Mammary epithelial cell (primary cell): ENCODE measurements at regions of chr2 and their contacts with region 1.

Region 1: DNA sequence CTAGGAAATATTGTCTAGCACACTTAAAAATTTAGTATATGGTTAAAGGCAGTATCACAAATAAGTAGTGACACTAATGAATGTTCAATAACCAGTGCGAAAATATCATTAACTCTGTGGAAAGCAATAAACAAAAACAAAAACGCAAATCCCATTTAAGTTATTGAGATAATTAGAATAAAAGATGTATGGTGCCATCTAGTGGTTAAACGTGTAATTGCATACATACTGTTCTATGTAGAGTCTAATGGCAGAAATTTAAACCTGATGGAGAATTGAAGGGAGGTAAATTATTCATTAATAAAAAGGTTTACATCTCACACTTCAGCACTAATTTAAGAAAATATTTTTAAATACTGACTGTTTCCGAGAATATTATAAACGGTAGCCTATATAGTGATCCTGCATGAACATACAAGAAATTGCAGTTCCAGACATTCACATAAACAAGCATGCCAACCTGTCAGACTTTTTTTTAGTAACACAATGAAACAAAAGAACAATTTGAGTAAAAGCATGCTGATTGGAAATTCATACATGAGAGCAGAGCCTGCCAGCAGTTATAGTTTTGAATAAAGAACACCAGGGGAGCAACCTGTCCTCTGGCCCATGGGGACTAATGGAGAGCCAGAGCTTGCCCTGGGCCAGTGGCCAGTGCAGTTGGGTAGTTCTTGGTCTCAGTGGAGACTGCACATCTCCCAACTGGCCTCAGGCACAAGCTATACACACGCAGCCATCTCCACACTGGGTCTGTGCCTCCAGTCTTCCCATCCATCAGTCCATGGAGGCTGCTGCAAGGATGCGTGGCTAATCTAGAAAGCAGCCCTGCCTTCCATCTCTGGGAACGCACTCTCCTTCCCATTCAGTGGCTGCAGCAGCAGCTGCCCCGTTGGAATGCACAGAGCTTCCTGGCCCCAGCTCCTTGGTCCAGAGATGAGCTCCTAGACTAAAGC is 28.0 kb downstream of the GCG start:
- DNase-seq: peak; percentile 38
- H3K4me3 ChIP-seq: no peak overlapping the region
- H3K27ac ChIP-seq: no peak overlapping the region
- H3K4me1 ChIP-seq: peaks cover 6% of the 10 kb centered on the region
- H3K27me3 ChIP-seq: no peaks in the 10 kb centered on the region
- CTCF ChIP-seq: peak; percentile 55 to 59

Region 2: GRCh38 chr2:161586517-161587167 is 537.4 kb before region 1 on chr2:
- CTCF ChIA-PET with region 1: no interaction called
- dilution Hi-C with region 1: no loop called
- in situ Hi-C with region 1: loop called in 1 of 2 experiments (anchors 10 kb)
- intact Hi-C with region 1: loop called (anchors 1 kb)
- DNase-seq: no peak
- H3K4me3 ChIP-seq: no peak overlapping the region
- H3K27ac ChIP-seq: no peak overlapping the region
- H3K4me1 ChIP-seq: no peaks in the 10 kb centered on the region
- H3K27me3 ChIP-seq: no peaks in the 10 kb centered on the region
- CTCF ChIP-seq: peak; percentile 68 to 73

Region 3: DNA sequence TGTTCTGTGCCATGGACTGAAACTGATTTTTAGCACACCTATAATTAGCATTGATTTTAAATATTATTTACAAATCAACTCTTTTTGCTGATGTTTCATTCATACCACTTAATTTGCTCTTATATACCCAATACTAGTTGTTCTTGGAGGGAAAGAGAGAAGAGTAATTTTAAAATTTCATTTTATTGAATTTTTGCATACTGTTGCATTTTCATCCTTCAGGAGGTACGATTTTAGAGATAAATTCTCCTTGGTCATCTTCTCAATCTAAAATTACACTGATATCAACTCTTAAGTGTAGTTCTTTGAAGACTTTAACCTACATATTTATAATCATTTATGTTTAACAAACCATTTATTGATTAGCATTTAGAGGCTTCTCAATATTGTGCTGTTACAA is 428.9 kb before region 1 on chr2:
- CTCF ChIA-PET with region 1: no interaction called
- dilution Hi-C with region 1: no loop called
- in situ Hi-C with region 1: no loop called
- intact Hi-C with region 1: no loop called
- DNase-seq: no peak
- H3K4me3 ChIP-seq: no peak overlapping the region
- H3K27ac ChIP-seq: no peak overlapping the region
- H3K4me1 ChIP-seq: no peaks in the 10 kb centered on the region
- H3K27me3 ChIP-seq: peaks cover 2% of the 10 kb centered on the region
- CTCF ChIP-seq: no peak

Region 4: DNA sequence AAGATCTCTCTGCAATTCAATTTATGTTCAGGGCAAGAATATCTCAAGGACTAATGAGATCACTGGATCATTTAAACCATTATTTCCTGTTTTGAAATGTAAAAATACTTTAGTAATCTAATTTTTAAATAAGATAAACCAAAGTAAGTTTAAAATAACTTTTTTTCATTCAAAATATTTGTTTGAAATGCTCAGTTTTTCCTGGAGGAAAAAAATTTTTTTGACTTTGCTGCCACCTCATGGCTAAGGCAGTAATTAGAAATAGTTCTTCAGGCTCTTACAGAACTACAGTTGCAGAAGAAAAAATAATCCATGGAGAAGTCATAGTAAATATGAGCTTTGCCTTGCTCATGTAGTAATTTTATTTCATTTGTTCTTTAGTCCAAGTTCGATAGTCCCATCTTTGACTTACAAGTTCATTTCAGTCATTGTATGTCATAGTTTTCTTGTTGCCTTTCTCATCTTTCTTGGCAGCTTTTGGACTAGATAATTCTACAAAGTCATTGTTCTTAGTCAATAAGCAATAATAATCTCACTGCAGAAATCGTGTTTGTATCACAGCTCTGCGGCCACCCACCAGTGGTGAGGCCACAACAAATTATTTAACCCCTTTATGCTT is 177.5 kb before region 1 on chr2:
- CTCF ChIA-PET with region 1: interaction called, 4 read pairs
- dilution Hi-C with region 1: no loop called
- in situ Hi-C with region 1: no loop called
- intact Hi-C with region 1: loop called (anchors 2 kb)
- DNase-seq: peak; percentile 7
- H3K4me3 ChIP-seq: no peak overlapping the region
- H3K27ac ChIP-seq: no peak overlapping the region
- H3K4me1 ChIP-seq: no peaks in the 10 kb centered on the region
- H3K27me3 ChIP-seq: peaks cover 4% of the 10 kb centered on the region
- CTCF ChIP-seq: peak; percentile 50 to 54

Region 5: DNA sequence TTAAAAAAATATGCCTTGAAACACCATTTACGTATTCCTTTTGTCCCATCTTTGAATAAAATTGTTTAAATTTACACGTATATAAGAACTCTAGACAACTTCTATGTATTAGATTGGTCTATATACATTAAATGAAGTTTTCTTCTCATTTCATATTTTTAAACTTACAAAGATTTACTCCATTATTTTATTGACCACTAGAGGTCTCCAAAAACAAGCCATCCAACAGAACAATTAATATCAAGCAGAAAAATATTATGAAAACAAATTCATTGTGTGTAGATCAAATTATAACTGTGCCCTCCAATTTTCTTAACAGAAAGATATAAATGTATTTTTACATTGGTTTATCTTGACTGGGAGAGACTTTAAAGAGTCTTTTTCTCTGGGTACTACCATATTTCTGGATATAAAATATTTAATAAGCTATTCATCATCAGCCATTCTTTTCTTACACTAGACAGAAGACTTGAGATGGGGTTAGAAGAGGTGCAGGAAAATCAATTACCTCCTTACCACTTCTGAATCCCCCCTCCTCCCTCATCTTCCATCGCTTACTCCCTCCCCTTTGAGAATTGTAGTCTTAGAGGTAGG is 116.5 kb before region 1 on chr2:
- CTCF ChIA-PET with region 1: no interaction called
- dilution Hi-C with region 1: no loop called
- in situ Hi-C with region 1: loop called (anchors 5 to 10 kb)
- intact Hi-C with region 1: loop called (anchors 1 kb)
- DNase-seq: no peak
- H3K4me3 ChIP-seq: no peak overlapping the region
- H3K27ac ChIP-seq: no peak overlapping the region
- H3K4me1 ChIP-seq: peaks cover 4% of the 10 kb centered on the region
- H3K27me3 ChIP-seq: no peaks in the 10 kb centered on the region
- CTCF ChIP-seq: peak; percentile 52 to 61

Region 6: GRCh38 chr2:162091325-162092007 is 32.6 kb before region 1 on chr2:
- CTCF ChIA-PET with region 1: no interaction called
- dilution Hi-C with region 1: no loop called
- in situ Hi-C with region 1: no loop called
- intact Hi-C with region 1: loop called (anchors 1 kb)
- DNase-seq: peak; percentile 90
- H3K4me3 ChIP-seq: no peak overlapping the region
- H3K27ac ChIP-seq: peak overlapping the region; percentile 93
- H3K4me1 ChIP-seq: peaks cover 66% of the 10 kb centered on the region
- H3K27me3 ChIP-seq: no peaks in the 10 kb centered on the region
- CTCF ChIP-seq: peak; percentile 36 to 51

Region 7: GRCh38 chr2:162153608-162154224 is 29.6 kb after region 1 on chr2:
- CTCF ChIA-PET with region 1: no interaction called
- dilution Hi-C with region 1: no loop called
- in situ Hi-C with region 1: no loop called
- intact Hi-C with region 1: no loop called
- DNase-seq: peak; percentile 58
- H3K4me3 ChIP-seq: no peak overlapping the region
- H3K27ac ChIP-seq: no peak overlapping the region
- H3K4me1 ChIP-seq: no peaks in the 10 kb centered on the region
- H3K27me3 ChIP-seq: no peaks in the 10 kb centered on the region
- CTCF ChIP-seq: peak; percentile 80 to 87

Region 8: GRCh38 chr2:162607915-162608314 is 483.8 kb after region 1 on chr2:
- CTCF ChIA-PET with region 1: no interaction called
- dilution Hi-C with region 1: no loop called
- in situ Hi-C with region 1: no loop called
- intact Hi-C with region 1: no loop called
- DNase-seq: no peak
- H3K4me3 ChIP-seq: no peak overlapping the region
- H3K27ac ChIP-seq: no peak overlapping the region
- H3K4me1 ChIP-seq: no peaks in the 10 kb centered on the region
- H3K27me3 ChIP-seq: peaks cover 2% of the 10 kb centered on the region
- CTCF ChIP-seq: no peak